Endothelial cell of umbilical vein (primary cell): ENCODE measurements at regions of chr6 and their contacts with region 1.

Region 1: GRCh38 chr6:84428300-84428907 is 201.0 kb upstream of the CEP162 start:
- DNase-seq: peak; percentile 82
- H3K4me3 ChIP-seq: no peak overlapping the region
- H3K27ac ChIP-seq: no peak overlapping the region
- H3K4me1 ChIP-seq: no peaks in the 10 kb centered on the region
- H3K27me3 ChIP-seq: no peaks in the 10 kb centered on the region
- CTCF ChIP-seq: peak; percentile 86 to 88
- POLR2A ChIP-seq: no peak

Region 2: DNA sequence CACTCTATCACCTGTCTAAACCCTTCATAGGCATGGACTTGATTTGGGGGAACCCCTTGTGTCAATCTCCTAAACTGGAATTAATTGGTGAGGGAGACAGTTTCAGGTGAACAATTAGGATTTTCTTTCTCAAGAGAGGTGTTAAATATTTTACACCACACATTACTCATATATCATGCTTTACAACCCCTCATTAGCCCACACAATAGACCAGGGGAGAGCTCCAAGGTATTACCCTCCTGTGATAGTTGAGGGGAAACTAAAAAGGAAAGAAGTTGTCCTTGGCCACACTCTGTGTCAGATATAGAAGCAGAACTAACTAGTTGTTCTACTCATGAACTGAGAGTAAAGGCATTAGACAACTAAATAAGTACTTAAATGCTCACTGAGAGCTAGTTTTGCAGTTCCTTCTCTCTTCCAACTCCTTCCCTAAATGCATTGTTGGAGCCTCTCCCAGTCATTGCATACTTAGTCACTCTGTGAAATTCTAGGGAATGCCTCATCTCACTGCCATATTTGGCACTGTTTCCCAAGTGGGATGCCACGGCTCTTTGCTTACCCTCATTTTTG is 17.3 kb before region 1 on chr6:
- CTCF ChIA-PET with region 1: no interaction called
- POLR2A ChIA-PET with region 1: no interaction called
- dilution Hi-C with region 1: no loop called
- intact Hi-C with region 1: no loop called
- DNase-seq: no peak
- H3K4me3 ChIP-seq: no peak overlapping the region
- H3K27ac ChIP-seq: no peak overlapping the region
- H3K4me1 ChIP-seq: no peaks in the 10 kb centered on the region
- H3K27me3 ChIP-seq: peaks cover 10 to 19% of the 10 kb centered on the region in 2 experiments
- CTCF ChIP-seq: no peak
- POLR2A ChIP-seq: no peak

Region 3: GRCh38 chr6:84492241-84493165 is 64.1 kb after region 1 on chr6:
- CTCF ChIA-PET with region 1: interaction called, 9 read pairs
- POLR2A ChIA-PET with region 1: no interaction called
- dilution Hi-C with region 1: no loop called
- intact Hi-C with region 1: loop called (anchors 2 kb)
- DNase-seq: peak; percentile 91
- H3K4me3 ChIP-seq: no peak overlapping the region
- H3K27ac ChIP-seq: peak overlapping the region; percentile 87
- H3K4me1 ChIP-seq: peaks cover 28% of the 10 kb centered on the region
- H3K27me3 ChIP-seq: no peaks in the 10 kb centered on the region
- CTCF ChIP-seq: no peak
- POLR2A ChIP-seq: peak; percentile 50

Region 4: GRCh38 chr6:84645000-84645399 is 216.6 kb after region 1 on chr6:
- CTCF ChIA-PET with region 1: interaction called, 12 read pairs
- POLR2A ChIA-PET with region 1: no interaction called
- dilution Hi-C with region 1: no loop called
- intact Hi-C with region 1: no loop called
- DNase-seq: peak; percentile 87
- H3K4me3 ChIP-seq: peak overlapping the region in 1 of 3 experiments; percentile 57
- H3K27ac ChIP-seq: peak overlapping the region; percentile 97
- H3K4me1 ChIP-seq: peaks cover 54% of the 10 kb centered on the region
- H3K27me3 ChIP-seq: no peaks in the 10 kb centered on the region
- CTCF ChIP-seq: no peak
- POLR2A ChIP-seq: no peak

Region 5: GRCh38 chr6:84685983-84686584 is 257.7 kb after region 1 on chr6:
- CTCF ChIA-PET with region 1: interaction called, 4 read pairs
- POLR2A ChIA-PET with region 1: no interaction called
- dilution Hi-C with region 1: no loop called
- intact Hi-C with region 1: loop called (anchors 1 kb)
- DNase-seq: no peak
- H3K4me3 ChIP-seq: no peak overlapping the region
- H3K27ac ChIP-seq: no peak overlapping the region
- H3K4me1 ChIP-seq: no peaks in the 10 kb centered on the region
- H3K27me3 ChIP-seq: no peaks in the 10 kb centered on the region
- CTCF ChIP-seq: peak; percentile 15 to 41
- POLR2A ChIP-seq: no peak

Region 6: DNA sequence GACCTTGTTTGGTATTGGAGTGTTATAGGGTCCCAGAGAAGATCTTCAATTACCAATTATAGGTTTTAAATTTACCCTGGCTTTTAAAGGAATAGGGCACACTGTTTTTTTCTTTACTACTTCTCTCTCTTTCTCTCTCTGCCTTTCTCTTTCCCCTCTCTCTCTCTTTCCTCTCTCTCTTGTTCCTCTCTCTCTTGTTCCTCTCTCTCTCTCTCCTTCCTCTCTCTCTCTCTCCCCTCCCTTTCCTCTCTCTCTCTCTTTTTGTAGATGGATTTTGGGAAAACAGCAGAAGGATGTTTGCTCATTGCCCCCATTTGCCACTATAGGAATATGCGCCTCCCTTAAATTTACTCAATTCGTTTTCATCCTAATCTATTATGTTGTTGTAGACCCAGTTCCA is 290.7 kb after region 1 on chr6:
- CTCF ChIA-PET with region 1: no interaction called
- POLR2A ChIA-PET with region 1: no interaction called
- dilution Hi-C with region 1: no loop called
- intact Hi-C with region 1: no loop called
- DNase-seq: no peak
- H3K4me3 ChIP-seq: no peak overlapping the region
- H3K27ac ChIP-seq: no peak overlapping the region
- H3K4me1 ChIP-seq: no peaks in the 10 kb centered on the region
- H3K27me3 ChIP-seq: no peaks in the 10 kb centered on the region
- CTCF ChIP-seq: no peak
- POLR2A ChIP-seq: no peak

Region 7: DNA sequence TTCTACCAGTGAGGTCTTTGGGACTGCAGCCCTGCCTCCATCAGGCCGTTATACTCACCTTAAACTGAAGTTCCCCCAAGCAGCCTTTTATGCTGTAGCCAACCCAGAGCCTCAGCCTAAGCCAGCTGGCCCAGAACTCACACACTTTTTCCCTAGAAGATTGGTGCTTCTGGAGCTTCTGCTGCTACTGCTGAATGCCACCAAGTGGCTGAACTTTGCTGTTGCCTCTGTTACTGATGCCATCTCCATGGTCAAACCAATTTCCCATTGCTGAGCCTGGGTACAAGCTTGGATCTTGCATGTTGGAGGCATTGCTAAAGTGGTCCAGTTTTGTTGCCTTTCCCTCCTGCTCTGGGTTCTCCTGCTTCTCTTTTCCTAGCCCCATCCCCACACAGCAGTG is 351.0 kb after region 1 on chr6:
- CTCF ChIA-PET with region 1: interaction called, 170 read pairs
- POLR2A ChIA-PET with region 1: no interaction called
- dilution Hi-C with region 1: no loop called
- intact Hi-C with region 1: loop called (anchors 1 kb)
- DNase-seq: no peak
- H3K4me3 ChIP-seq: no peak overlapping the region
- H3K27ac ChIP-seq: no peak overlapping the region
- H3K4me1 ChIP-seq: peaks cover 3% of the 10 kb centered on the region
- H3K27me3 ChIP-seq: peaks cover 9 to 44% of the 10 kb centered on the region in 2 experiments
- CTCF ChIP-seq: peak; percentile 21 to 46
- POLR2A ChIP-seq: no peak